PC-9 (cell line): ENCODE measurements at regions of chr6 and their contacts with region 1.

Region 1: DNA sequence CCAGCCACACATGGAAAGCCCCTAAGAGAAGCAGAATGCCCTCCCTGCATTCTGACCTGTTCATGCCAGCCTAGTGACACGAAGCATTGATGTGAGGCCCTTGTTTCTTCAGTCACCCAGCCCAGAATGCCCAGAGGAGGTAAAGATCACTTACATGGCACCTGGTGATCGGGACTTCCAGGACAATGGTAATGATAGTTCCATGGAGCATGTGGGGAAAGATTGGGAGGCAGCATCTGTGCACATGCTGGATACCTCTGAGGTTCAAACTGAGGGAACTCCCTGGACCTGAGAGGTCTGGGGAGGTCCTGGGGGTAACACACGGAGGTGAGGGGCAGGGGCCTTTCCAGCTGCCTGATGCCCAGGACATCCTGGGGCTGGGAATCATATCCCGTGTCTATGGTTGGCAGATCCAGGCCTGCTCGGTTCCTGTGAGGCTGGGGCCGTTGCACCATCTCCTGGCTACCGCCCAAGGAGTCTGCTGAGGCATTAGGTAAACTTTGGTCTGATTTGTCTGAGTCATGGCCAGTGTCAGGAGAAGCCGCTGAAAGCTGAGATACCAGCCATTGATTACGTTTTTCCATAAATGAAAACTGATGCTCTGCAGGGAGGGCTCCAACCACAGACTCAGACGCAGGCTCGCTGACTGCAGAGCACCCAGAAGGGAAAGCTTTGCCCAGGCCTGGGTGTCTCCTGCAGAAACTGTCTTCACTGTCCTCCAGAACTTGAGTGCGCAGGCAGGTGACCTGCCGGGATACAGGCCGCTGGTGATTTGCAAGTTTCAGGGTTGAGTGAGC is 14.4 kb downstream of the TRAF3IP2 start:
- DNase-seq: peak; percentile 90 to 97
- H3K4me3 ChIP-seq: peak overlapping the region; percentile 21; the same call in 1 of the 2 replicates
- H3K27ac ChIP-seq: peak overlapping the region; percentile 96
- H3K4me1 ChIP-seq: peaks cover 69% of the 10 kb centered on the region
- H3K27me3 ChIP-seq: no peaks in the 10 kb centered on the region
- CTCF ChIP-seq: no peak

Region 2: GRCh38 chr6:111573892-111574797 is 17.2 kb before region 1 on chr6:
- CTCF ChIA-PET with region 1: interaction called, 16 read pairs
- POLR2A ChIA-PET with region 1: no interaction called
- intact Hi-C with region 1: no loop called
- DNase-seq: no peak
- H3K4me3 ChIP-seq: no peak overlapping the region
- H3K27ac ChIP-seq: no peak overlapping the region
- H3K4me1 ChIP-seq: no peaks in the 10 kb centered on the region
- H3K27me3 ChIP-seq: no peaks in the 10 kb centered on the region
- CTCF ChIP-seq: no peak

Region 3: DNA sequence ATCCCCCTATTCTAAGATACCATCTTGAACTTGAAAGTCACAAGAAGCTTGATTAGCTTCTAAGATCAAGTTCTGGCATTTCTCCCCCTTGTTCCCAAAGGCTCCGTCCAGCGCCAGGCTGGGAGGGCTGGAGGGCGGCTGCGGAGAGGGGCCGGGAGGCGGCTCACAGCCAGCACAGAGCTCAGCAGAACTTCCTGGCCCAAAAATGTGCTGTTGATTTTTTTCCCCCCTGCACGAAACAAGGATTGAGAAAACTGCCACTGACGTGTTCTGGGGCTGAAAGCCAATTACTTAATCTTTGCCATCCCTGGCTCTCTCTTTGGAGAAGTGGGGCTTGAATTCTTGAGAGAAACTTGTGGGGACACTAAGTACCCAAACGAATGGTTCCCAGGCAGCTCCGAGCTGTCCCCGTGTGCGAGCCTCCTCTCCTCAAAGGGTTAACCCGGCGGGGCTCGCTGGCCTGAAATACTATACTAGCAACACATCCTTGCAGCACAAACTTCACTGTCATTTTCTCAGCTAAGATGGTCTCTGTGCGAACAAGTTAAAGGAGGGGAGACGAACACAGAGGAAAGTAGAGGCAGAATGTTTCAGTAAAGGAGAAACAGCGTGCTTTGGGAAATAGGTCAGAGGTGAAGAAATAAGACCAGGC is 13.9 kb after region 1 on chr6:
- CTCF ChIA-PET with region 1: no interaction called
- POLR2A ChIA-PET with region 1: interaction called, 5 read pairs
- intact Hi-C with region 1: loop called (anchors 1 kb)
- DNase-seq: peak in 1 of 2 experiments; percentile 34
- H3K4me3 ChIP-seq: peak overlapping the region; percentile 79
- H3K27ac ChIP-seq: peak overlapping the region; percentile 95
- H3K4me1 ChIP-seq: peaks cover 37% of the 10 kb centered on the region
- H3K27me3 ChIP-seq: no peaks in the 10 kb centered on the region
- CTCF ChIP-seq: no peak